ENCODE measurements at regions of chr22 and their contacts with region 1.

Region 1: GRCh38 chr22:39543095-39543494 is 10.5 kb upstream of the RPS19BP1 start:
- DNase-seq: peak in 3 of 35 experiments; percentile 20 to 48 (median 29)
- ATAC-seq: peak in 1 of 4 experiments; percentile 51
- H3K4me3 ChIP-seq: no peak overlapping the region
- H3K4me3 Mint-ChIP-seq: no peak overlapping the region
- H3K27ac ChIP-seq: no peak overlapping the region
- H3K27ac Mint-ChIP-seq: no peak overlapping the region
- H3K4me1 ChIP-seq: peaks cover 0 to 26% of the 10 kb centered on the region in 2 experiments
- H3K4me1 Mint-ChIP-seq: peaks cover 17 to 21% (median 20%) of the 10 kb centered on the region in 3 donors
- H3K27me3 ChIP-seq: peaks cover 0 to 42% of the 10 kb centered on the region in 2 experiments
- H3K27me3 Mint-ChIP-seq: peaks cover 20 to 34% of the 10 kb centered on the region in 2 donors

Region 2: DNA sequence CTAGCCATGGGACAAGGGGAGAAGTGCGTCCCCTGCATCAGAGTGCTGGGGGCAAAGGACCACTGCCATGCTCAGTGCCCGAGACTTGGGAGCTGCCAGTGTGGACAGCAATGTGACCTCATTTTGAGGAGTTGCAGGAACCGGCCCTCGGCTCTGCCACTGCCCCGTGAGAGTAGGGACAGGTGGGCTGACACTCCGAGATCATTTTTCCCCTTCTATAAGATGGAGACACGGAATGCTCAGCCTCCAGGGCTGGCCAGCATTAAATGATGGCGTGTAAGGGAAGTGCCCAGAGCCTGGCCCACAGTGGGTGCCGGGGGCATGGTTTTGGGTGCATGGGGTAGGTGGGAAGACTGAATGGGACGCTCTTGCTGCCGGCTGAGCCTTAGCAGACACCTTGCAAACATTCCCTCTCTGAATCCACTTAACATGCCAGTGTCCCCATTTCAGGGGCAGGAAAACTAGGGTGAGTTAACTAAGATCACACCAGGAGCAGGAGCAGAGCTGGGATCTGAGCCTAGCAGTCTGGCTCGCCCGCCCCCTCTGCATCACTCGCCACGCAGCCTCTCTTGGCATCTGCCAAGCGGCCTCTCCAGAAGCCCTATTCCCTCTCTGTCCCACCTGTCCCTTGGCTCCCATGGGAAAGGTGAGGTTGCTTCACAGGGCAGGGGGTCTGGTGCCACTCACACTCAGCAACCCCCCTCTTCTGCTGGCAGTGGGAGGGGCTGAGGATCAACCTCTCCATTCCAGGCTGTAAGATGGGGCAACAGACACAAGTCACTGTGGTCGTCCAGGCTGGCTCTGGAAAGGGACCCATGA is 712.9 kb before region 1 on chr22:
- CTCF ChIA-PET with region 1: no interaction called
- POLR2A ChIA-PET with region 1: interaction called in 1 of 2 experiments, 14 read pairs
- DNase-seq: no peak
- ATAC-seq: no peak
- H3K4me3 ChIP-seq: no peak overlapping the region
- H3K4me3 Mint-ChIP-seq: no peak overlapping the region
- H3K27ac ChIP-seq: no peak overlapping the region
- H3K27ac Mint-ChIP-seq: no peak overlapping the region
- H3K4me1 ChIP-seq: no peaks in the 10 kb centered on the region
- H3K4me1 Mint-ChIP-seq: no peaks in the 10 kb centered on the region
- H3K27me3 ChIP-seq: peaks cover 0 to 6% of the 10 kb centered on the region in 2 experiments
- H3K27me3 Mint-ChIP-seq: no peaks in the 10 kb centered on the region